GM12878 (cell line): ENCODE measurements at regions of chrX and their contacts with region 1.

Region 1: DNA sequence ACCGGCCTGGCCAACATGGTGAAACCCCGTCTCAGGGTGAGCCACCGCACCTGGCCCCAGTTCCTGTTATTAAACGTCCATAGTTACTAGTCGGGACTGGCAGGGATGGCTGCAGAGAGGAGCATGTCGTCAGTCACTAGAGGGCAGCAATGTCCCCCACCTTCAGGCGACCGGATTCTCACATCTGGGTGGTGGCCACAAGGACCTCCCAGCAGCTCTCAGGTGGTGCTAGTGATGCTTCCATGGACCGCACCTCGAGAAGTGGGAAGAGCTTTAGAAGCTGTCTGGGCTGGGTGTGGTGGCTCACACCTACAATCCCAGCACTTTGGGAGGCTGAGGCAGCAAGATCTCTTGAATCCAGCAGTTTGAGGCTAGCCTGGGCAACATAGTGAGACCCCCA is 13.3 kb upstream of the IL3RA start:
- DNase-seq: peak; percentile 55
- ATAC-seq: peak; percentile 77
- H3K4me3 ChIP-seq: no peak overlapping the region
- H3K27ac ChIP-seq: no peak overlapping the region
- H3K4me1 ChIP-seq: peaks cover 22% of the 10 kb centered on the region
- H3K27me3 ChIP-seq: no peaks in the 10 kb centered on the region
- CTCF ChIP-seq: peak; percentile 55 to 67 (median 60); a peak in 5 of 6 replicates
- EP300 ChIP-seq: no peak
- POLR2A ChIP-seq: no peak
- RAD21 ChIP-seq: peak; percentile 56

Region 2: DNA sequence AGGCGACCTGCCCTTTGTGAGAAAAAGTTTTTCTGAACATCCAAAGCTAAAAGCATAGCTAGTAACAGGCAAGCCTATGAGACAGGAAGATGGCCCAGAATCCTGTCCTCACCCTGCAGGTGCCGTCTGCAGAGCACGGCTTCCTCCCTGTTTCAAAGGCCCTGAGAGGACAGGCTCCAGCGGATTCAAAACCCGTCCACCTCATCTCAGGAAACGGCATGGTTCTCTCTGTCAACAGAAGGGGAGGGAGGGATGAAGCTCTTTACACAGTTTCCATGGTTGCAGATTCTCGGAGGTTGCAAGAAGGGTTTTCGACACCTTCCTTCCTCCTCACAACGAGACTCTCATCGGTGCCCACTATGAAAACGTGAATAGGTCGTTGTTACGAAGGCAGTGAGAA is 944.9 kb before region 1 on chrX:
- CTCF ChIA-PET with region 1: no interaction called
- POLR2A ChIA-PET with region 1: no interaction called
- RAD21 ChIA-PET with region 1: no interaction called
- SMC1A ChIA-PET with region 1: no interaction called
- in situ Hi-C with region 1: no loop called
- intact Hi-C with region 1: no loop called
- DNase-seq: no peak
- ATAC-seq: no peak
- H3K4me3 ChIP-seq: no peak overlapping the region
- H3K27ac ChIP-seq: no peak overlapping the region
- H3K4me1 ChIP-seq: no peaks in the 10 kb centered on the region
- H3K27me3 ChIP-seq: peaks cover 2 to 6% of the 10 kb centered on the region in 2 experiments; a peak in 2 of 4 replicates
- CTCF ChIP-seq: no peak
- EP300 ChIP-seq: no peak
- POLR2A ChIP-seq: no peak
- RAD21 ChIP-seq: no peak

Region 3: GRCh38 chrX:1391707-1392375 is 68.5 kb after region 1 on chrX and contains the start of gene SLC25A6:
- CTCF ChIA-PET with region 1: no interaction called
- POLR2A ChIA-PET with region 1: no interaction called
- RAD21 ChIA-PET with region 1: no interaction called
- SMC1A ChIA-PET with region 1: no interaction called
- in situ Hi-C with region 1: no loop called
- intact Hi-C with region 1: loop called (anchors 2 kb)
- DNase-seq: peak; percentile 88
- ATAC-seq: peak; percentile 95
- H3K4me3 ChIP-seq: peak within 1 kb of the TSS; percentile 94
- H3K27ac ChIP-seq: peak within 1 kb of the TSS; percentile 99
- H3K4me1 ChIP-seq: peaks cover 10% of the 10 kb centered on the region
- H3K27me3 ChIP-seq: no peaks in the 10 kb centered on the region
- CTCF ChIP-seq: 0 out of 6 replicates have a peak, but pooled peaks of 1 of the 3 experiments have one; percentile 10
- EP300 ChIP-seq: no peak
- POLR2A ChIP-seq: peak; percentile 97
- RAD21 ChIP-seq: no peak
- polyA plus RNA-seq, gene SLC25A6: 61.9 to 127 TPM

Region 4: GRCh38 chrX:1679238-1679637 is 355.9 kb after region 1 on chrX:
- CTCF ChIA-PET with region 1: no interaction called
- POLR2A ChIA-PET with region 1: no interaction called
- RAD21 ChIA-PET with region 1: no interaction called
- SMC1A ChIA-PET with region 1: no interaction called
- in situ Hi-C with region 1: no loop called
- intact Hi-C with region 1: no loop called
- DNase-seq: no peak
- ATAC-seq: peak; percentile 67
- H3K4me3 ChIP-seq: no peak overlapping the region
- H3K27ac ChIP-seq: no peak overlapping the region
- H3K4me1 ChIP-seq: no peaks in the 10 kb centered on the region
- H3K27me3 ChIP-seq: no peaks in the 10 kb centered on the region
- CTCF ChIP-seq: no peak
- EP300 ChIP-seq: no peak
- POLR2A ChIP-seq: no peak
- RAD21 ChIP-seq: no peak

Region 5: DNA sequence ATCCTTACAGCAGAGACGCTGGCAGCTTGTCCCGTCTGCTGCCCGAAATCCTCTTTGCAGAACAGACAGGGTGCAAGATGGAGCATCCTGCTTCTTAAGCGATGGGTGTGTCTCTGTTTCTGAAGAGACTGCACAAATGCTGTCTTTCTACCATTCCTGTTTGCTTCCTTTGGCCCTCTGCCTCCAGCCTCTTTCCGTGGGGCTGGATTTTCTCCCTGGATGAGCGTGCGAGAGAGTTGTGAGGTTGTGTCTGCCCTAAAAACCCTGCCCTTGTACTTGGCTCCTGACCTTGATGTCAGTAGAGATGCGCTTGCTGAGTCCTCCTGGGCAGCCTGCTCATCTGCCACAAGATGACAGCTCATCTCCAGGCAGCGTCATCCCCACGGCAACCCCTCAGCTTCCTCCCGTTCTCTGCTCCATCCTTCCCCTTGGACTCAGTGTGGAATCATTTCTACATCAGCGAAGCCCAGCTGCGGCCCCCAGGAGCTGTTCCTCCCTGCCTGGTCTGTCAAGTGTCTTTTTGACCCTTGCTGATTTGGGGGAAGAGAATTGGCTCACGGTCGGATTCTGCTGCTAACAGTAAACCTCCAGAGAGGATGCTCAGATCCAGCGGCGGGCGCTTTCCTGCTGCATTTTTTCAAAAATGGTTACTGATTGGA is 537.8 kb after region 1 on chrX:
- CTCF ChIA-PET with region 1: no interaction called
- POLR2A ChIA-PET with region 1: no interaction called
- RAD21 ChIA-PET with region 1: no interaction called
- SMC1A ChIA-PET with region 1: no interaction called
- in situ Hi-C with region 1: no loop called
- intact Hi-C with region 1: no loop called
- DNase-seq: no peak
- ATAC-seq: no peak
- H3K4me3 ChIP-seq: no peak overlapping the region
- H3K27ac ChIP-seq: no peak overlapping the region
- H3K4me1 ChIP-seq: no peaks in the 10 kb centered on the region
- H3K27me3 ChIP-seq: no peaks in the 10 kb centered on the region
- CTCF ChIP-seq: no peak
- EP300 ChIP-seq: no peak
- POLR2A ChIP-seq: no peak
- RAD21 ChIP-seq: no peak